ENCODE measurements at regions of chr2 and their contacts with region 1.

Region 1: DNA sequence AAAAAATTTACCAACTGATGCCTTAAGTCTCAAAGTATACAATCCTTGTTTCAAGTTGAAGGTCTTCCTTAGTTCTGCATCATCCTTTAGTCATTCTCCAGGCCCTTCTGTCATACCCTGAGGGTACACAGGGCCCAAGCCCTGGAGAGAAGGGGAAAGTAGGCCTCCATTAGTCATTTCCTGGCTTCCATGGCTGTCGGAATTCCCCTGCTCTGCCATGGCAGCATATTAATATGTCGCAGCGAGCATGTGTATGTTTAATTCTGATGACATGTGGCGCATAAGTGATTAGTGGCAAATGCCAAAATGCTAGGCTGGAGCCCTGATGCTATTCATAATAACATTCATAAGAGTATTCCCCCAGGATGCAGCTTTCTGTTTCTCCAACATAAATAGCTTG is 22.1 kb downstream of the GPR39 start:
- DNase-seq: peak; percentile 99
- ATAC-seq: peak; percentile 76
- H3K4me3 ChIP-seq: peak overlapping the region; percentile 25; the same call in 1 of the 2 replicates
- H3K27ac ChIP-seq: peak overlapping the region; percentile 98
- H3K4me1 ChIP-seq: peaks cover 52% of the 10 kb centered on the region
- H3K27me3 ChIP-seq: no peaks in the 10 kb centered on the region
- CTCF ChIP-seq: no peak

Region 2: GRCh38 chr2:132977812-132978529 is 539.3 kb after region 1 on chr2:
- CTCF ChIA-PET with region 1: interaction called, 11 read pairs
- POLR2A ChIA-PET with region 1: no interaction called
- intact Hi-C with region 1: no loop called
- DNase-seq: peak; percentile 50
- ATAC-seq: peak; percentile 55
- H3K4me3 ChIP-seq: no peak overlapping the region
- H3K27ac ChIP-seq: no peak overlapping the region
- H3K4me1 ChIP-seq: peaks cover 8% of the 10 kb centered on the region; the same call in 1 of the 2 replicates
- H3K27me3 ChIP-seq: no peaks in the 10 kb centered on the region
- CTCF ChIP-seq: no peak

Region 3: DNA sequence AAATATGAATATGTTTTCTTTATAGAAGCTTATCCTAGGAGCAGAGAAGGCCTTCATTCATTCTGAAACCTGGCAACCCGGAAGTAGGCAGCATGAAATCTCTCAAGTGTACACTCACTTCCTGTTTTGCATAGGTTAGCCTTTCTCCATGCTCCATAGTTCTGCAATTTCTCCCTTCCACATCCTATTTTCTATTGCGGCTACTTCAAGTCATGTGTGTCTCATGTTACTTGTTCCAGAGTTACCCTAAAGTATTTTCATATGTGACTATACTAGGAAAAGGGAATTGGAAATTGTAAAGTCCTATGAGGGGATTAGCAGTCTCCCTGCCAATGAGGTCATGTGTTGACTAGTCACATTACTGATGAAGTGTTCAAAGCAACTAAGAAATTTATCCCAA is 808.9 kb after region 1 on chr2:
- CTCF ChIA-PET with region 1: no interaction called
- POLR2A ChIA-PET with region 1: interaction called, 34 read pairs
- intact Hi-C with region 1: no loop called
- DNase-seq: no peak
- ATAC-seq: no peak
- H3K4me3 ChIP-seq: no peak overlapping the region
- H3K27ac ChIP-seq: no peak overlapping the region
- H3K4me1 ChIP-seq: no peaks in the 10 kb centered on the region
- H3K27me3 ChIP-seq: no peaks in the 10 kb centered on the region
- CTCF ChIP-seq: no peak

Measured in PC-3 (cell line).